ENCODE measurements at regions of chr17 and their contacts with region 1.

Region 1: DNA sequence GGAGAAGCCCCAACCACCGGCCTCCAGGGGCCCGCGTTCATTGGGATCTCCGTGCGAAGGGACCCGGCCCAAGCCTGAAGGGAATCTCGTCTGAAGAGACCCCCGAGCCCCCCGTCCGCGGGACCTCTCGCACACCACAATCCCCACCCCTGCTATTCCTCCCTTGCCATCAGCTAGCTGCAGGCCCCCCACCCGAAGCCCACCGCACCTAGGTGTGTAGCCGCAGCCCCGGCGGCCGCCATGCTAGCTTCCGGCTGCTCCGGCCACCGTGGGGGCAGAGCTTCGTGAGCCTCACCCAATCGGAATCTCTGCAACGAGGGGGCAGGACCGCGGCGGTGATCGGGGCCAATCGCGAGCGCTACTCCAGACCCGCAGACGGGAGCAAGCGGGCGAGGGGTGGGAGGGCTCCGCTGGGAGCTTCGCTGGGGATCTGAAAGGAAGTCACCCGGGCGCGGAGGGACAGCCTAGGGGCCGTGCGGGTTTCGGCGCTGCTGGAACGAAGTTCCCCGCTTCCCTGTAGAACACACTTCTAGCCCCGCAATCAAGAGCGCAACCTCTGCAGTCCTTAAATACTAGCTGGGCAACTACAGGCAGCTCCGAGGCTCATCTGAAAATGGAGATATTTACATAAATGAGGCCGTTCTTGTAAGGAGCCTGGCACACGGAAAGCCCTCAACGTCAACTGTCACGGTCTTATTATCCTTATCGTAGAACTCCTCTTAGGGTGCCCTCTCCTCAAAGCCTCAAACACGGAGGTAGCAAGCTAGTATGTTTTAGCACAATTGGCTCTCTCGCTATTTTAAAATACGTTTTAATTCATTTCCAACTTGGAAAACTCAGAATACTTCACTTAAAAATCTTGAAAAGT is at the start of gene PIGS:
- DNase-seq: peak; percentile 87
- ATAC-seq: peak; percentile 96
- H3K4me3 ChIP-seq: peak within 1 kb of the TSS; percentile 85 to 95 (median 92)
- H3K27ac ChIP-seq: peak within 1 kb of the TSS; percentile 67
- H3K4me1 ChIP-seq: peaks cover 54% of the 10 kb centered on the region
- H3K27me3 ChIP-seq: no peaks in the 10 kb centered on the region
- CTCF ChIP-seq: no peak
- EP300 ChIP-seq: no peak; a peak in 1 of 4 replicates
- POLR2A ChIP-seq: peak; percentile 55 to 80; a peak in 3 of 4 replicates
- RAD21 ChIP-seq: no peak
- total RNA-seq, gene PIGS: 26.6 and 42.6 TPM in 2 replicates

Region 2: GRCh38 chr17:28623696-28624095 is 52.2 kb after region 1 on chr17:
- CTCF ChIA-PET with region 1: no interaction called
- POLR2A ChIA-PET with region 1: no interaction called
- in situ Hi-C with region 1: loop called (anchors 5 kb)
- intact Hi-C with region 1: no loop called
- DNase-seq: no peak
- ATAC-seq: no peak
- H3K4me3 ChIP-seq: no peak overlapping the region
- H3K27ac ChIP-seq: no peak overlapping the region
- H3K4me1 ChIP-seq: peaks cover 5% of the 10 kb centered on the region; the same call in 1 of the 2 replicates
- H3K27me3 ChIP-seq: no peaks in the 10 kb centered on the region
- CTCF ChIP-seq: no peak
- EP300 ChIP-seq: no peak
- POLR2A ChIP-seq: no peak
- RAD21 ChIP-seq: no peak